B cell (primary cell): ENCODE measurements at regions of chr12 and their contacts with region 1.

Region 1: DNA sequence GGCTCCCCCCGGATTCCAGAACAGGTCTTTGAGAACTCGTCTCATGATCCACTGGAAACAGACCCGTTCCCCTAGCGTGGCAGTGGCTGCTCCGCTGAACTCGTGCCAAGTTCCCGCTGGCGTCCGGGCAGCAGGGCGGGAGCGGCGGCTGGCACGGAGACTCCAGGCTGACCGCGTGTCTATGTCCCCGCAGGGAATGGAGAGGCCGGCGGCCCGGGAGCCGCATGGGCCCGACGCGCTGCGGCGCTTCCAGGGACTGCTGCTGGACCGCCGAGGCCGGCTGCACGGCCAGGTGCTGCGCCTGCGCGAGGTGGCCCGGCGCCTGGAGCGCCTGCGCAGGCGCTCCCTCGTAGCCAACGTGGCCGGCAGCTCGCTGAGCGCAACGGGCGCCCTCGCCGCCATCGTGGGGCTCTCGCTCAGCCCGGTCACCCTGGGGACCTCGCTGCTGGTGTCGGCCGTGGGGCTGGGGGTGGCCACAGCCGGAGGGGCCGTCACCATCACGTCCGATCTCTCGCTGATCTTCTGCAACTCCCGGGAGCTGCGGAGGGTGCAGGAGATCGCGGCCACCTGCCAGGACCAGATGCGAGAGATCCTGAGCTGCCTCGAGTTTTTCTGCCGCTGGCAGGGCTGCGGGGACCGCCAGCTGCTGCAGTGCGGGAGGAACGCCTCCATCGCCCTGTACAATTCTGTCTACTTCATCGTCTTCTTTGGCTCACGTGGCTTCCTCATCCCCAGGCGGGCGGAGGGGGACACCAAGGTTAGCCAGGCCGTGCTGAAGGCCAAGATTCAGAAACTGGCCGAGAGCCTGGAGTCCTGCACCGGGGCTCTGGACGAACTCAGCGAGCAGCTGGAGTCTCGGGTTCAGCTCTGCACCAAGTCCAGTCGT is 1.5 kb downstream of the APOLD1 start:
- DNase-seq: peak; percentile 85
- ATAC-seq: peak; percentile 92
- H3K4me3 ChIP-seq: peak overlapping the region; percentile 54 to 88 (median 77)
- H3K4me3 Mint-ChIP-seq: peak overlapping the region; percentile 90
- H3K27ac ChIP-seq: peak overlapping the region; percentile 77 to 82
- H3K27ac Mint-ChIP-seq: peak overlapping the region; percentile 92
- H3K4me1 ChIP-seq: peaks cover 10 to 24% of the 10 kb centered on the region in 2 donors
- H3K4me1 Mint-ChIP-seq: peaks cover 20% of the 10 kb centered on the region
- H3K27me3 ChIP-seq: no peaks in the 10 kb centered on the region
- H3K27me3 Mint-ChIP-seq: no peaks in the 10 kb centered on the region
- CTCF ChIP-seq: peak; percentile 14

Region 2: GRCh38 chr12:12376646-12377448 is 410.1 kb before region 1 on chr12:
- CTCF ChIA-PET with region 1: interaction called, 4 read pairs
- POLR2A ChIA-PET with region 1: no interaction called
- intact Hi-C with region 1: loop called (anchors 1 kb)
- DNase-seq: peak; percentile 78
- ATAC-seq: peak; percentile 64
- H3K4me3 ChIP-seq: no peak overlapping the region
- H3K4me3 Mint-ChIP-seq: no peak overlapping the region
- H3K27ac ChIP-seq: no peak overlapping the region
- H3K27ac Mint-ChIP-seq: no peak overlapping the region
- H3K4me1 ChIP-seq: peaks cover 10 to 12% of the 10 kb centered on the region in 2 donors
- H3K4me1 Mint-ChIP-seq: peaks cover 21% of the 10 kb centered on the region
- H3K27me3 ChIP-seq: no peaks in the 10 kb centered on the region
- H3K27me3 Mint-ChIP-seq: no peaks in the 10 kb centered on the region
- CTCF ChIP-seq: peak; percentile 79

Region 3: DNA sequence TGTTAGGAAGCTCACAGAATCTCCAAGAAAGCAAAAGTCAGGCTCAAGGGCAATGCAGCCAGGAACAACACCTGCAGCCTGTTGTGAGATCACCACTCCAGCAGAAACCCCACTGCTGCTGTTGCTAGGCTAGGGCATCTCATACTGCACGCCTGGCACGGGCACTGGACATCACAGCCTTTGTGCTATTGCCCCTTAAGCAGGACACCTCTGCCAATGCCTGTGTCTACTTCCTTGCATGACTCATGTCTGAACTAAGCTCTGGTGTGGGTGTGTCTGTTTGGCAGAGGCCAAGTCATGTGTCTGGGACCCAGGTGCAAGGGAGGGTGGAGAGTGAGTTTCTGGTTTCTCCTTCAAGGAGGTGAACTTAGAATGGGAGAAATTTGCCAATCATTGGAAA is 16.2 kb after region 1 on chr12:
- CTCF ChIA-PET with region 1: interaction called, 189 read pairs
- POLR2A ChIA-PET with region 1: interaction called, 7 read pairs
- intact Hi-C with region 1: loop called (anchors 1 kb)
- DNase-seq: peak; percentile 45
- ATAC-seq: peak; percentile 51
- H3K4me3 ChIP-seq: no peak overlapping the region
- H3K4me3 Mint-ChIP-seq: peak overlapping the region; percentile 80
- H3K27ac ChIP-seq: no peak overlapping the region
- H3K27ac Mint-ChIP-seq: peak overlapping the region; percentile 86
- H3K4me1 ChIP-seq: peaks cover 23 to 45% of the 10 kb centered on the region in 2 donors
- H3K4me1 Mint-ChIP-seq: peaks cover 56% of the 10 kb centered on the region
- H3K27me3 ChIP-seq: no peaks in the 10 kb centered on the region
- H3K27me3 Mint-ChIP-seq: no peaks in the 10 kb centered on the region
- CTCF ChIP-seq: no peak

Region 4: GRCh38 chr12:12821975-12822374 is 35.0 kb after region 1 on chr12:
- CTCF ChIA-PET with region 1: interaction called, 189 read pairs
- POLR2A ChIA-PET with region 1: no interaction called
- intact Hi-C with region 1: no loop called
- DNase-seq: no peak
- ATAC-seq: no peak
- H3K4me3 ChIP-seq: no peak overlapping the region
- H3K4me3 Mint-ChIP-seq: no peak overlapping the region
- H3K27ac ChIP-seq: no peak overlapping the region
- H3K27ac Mint-ChIP-seq: no peak overlapping the region
- H3K4me1 ChIP-seq: no peaks in the 10 kb centered on the region
- H3K4me1 Mint-ChIP-seq: peaks cover 26% of the 10 kb centered on the region
- H3K27me3 ChIP-seq: no peaks in the 10 kb centered on the region
- H3K27me3 Mint-ChIP-seq: no peaks in the 10 kb centered on the region
- CTCF ChIP-seq: no peak

Region 5: DNA sequence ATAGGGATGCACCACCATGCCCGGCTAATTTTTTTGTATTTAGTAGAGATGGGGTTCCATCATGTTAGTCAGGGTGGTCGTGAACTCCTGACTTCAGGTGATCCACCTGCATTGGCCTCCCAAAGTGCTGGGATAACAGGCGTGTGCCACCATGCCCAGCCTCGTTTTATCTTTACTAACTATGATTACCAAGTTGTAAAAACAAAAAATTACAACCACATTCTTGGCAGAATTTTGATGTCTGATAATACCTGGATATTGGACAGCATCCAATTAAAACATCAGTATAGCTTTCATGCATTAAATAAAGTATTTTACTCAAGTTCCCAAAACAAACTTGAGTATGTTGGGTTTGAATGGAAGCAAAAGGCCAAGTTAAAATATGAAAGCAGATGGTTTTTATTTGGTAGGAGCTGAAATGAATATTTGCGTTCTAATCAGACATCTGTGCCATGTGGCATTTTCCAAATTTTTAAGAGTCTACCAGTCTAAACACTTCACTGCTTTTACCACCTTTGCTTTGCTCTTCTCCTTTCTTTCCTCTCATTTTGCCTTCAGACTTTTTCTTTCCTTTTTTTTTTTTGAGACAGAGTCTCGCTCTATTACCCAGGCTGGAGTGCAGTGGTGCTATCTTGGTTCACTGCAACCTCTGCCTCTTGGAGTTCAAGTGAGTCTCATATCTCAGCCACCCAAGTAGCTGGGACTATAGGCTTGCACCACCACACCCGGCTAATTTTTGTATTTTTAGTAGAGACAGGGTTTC is 58.2 kb after region 1 on chr12:
- CTCF ChIA-PET with region 1: no interaction called
- POLR2A ChIA-PET with region 1: no interaction called
- intact Hi-C with region 1: no loop called
- DNase-seq: no peak
- ATAC-seq: no peak
- H3K4me3 ChIP-seq: no peak overlapping the region
- H3K4me3 Mint-ChIP-seq: no peak overlapping the region
- H3K27ac ChIP-seq: no peak overlapping the region
- H3K27ac Mint-ChIP-seq: no peak overlapping the region
- H3K4me1 ChIP-seq: no peaks in the 10 kb centered on the region
- H3K4me1 Mint-ChIP-seq: no peaks in the 10 kb centered on the region
- H3K27me3 ChIP-seq: no peaks in the 10 kb centered on the region
- H3K27me3 Mint-ChIP-seq: no peaks in the 10 kb centered on the region
- CTCF ChIP-seq: no peak

Region 6: DNA sequence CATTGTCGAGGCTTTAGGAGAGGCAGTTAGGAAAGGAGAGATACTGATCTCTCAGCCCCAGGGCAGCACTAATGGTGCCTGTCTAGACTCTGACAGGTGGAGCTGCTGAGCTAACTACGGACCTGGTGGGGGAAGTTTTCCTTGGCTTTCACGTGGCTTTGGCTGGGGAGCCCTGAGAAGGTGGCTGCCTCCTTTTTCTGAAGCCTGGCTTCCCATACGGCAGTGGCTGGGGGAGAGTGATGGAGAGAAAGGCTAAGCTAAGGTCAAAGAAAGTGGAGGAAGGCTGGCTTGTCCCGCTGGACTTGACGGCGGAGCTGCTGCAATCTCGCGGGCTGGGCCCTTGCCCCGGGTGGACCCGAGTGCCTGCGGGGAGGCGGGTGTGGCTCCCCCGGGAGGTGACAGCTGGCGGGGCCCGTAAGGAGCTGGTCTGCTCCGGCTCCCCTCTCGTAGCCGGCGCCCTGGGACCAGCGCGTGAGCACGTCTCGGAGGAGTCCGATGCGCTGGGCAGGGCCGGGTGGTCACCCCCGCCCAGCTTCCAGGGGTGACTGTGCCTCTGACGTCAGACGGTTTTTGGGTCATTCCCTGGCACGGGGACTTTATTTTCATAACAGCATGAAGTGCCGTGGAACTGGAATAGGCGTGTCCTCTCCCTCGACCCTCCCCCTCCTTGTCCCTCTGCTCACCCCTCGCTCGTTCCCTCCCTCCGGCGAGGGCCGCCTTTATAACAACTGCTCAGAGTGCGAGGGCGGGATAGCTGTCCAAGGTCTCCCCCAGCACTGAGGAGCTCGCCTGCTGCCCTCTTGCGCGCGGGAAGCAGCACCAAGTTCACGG is 104.1 kb after region 1 on chr12 and contains the start of gene GPRC5A:
- CTCF ChIA-PET with region 1: interaction called, 3 read pairs
- POLR2A ChIA-PET with region 1: no interaction called
- intact Hi-C with region 1: loop called (anchors 5 kb)
- DNase-seq: peak; percentile 51
- ATAC-seq: peak; percentile 21
- H3K4me3 ChIP-seq: peak within 1 kb of the TSS in 4 of 5 experiments; percentile 17 to 50 (median 44)
- H3K4me3 Mint-ChIP-seq: peak within 1 kb of the TSS; percentile 87
- H3K27ac ChIP-seq: no peak within 1 kb of the TSS
- H3K27ac Mint-ChIP-seq: no peak within 1 kb of the TSS
- H3K4me1 ChIP-seq: peaks cover 15% of the 10 kb centered on the region in 2 donors
- H3K4me1 Mint-ChIP-seq: peaks cover 13% of the 10 kb centered on the region
- H3K27me3 ChIP-seq: peaks cover 0 to 44% (median 30%) of the 10 kb centered on the region in 4 experiments
- H3K27me3 Mint-ChIP-seq: peaks cover 60% of the 10 kb centered on the region
- CTCF ChIP-seq: no peak
- total RNA-seq, gene GPRC5A: not detected in 2 replicates

Region 7: DNA sequence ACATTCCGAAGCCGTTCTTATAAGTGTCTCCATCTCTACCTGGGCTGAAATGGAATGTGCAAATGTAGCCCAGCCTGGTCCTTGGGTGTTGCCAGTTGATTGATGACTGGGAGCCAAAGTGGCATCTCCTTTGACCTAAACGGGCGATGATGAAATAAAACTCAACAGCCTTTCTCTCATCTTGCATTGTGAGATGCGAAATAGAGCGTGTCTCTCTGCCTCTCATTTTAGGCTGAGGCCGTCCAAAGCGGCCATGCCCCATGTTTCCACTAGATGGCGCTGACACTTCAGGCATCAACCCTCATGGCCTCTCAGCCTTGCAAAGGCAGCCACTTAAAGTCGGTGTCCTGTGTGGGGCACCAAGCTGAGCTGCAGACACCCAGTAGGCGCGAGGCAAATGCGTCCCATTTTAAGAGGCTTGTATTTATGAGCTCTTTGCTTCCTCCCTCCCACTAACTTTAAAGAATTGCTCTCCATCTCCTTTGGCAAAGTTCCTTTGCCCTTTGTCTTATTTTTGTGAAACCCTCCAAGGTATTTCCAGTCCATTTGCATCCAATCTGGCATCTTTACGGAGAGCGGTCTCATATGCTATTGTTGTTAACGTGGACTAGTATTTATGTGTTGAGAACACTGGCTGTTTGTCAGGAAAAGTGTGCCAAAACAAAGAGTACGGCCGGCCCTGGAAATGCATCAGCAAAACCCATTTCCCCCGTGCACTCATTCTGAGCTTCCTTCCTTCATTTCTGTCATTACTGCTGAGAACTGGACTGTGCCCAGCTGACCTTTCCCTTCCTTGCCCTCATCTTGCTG is 129.4 kb after region 1 on chr12:
- CTCF ChIA-PET with region 1: interaction called, 33 read pairs
- POLR2A ChIA-PET with region 1: no interaction called
- intact Hi-C with region 1: loop called (anchors 1 kb)
- DNase-seq: peak; percentile 88
- ATAC-seq: peak; percentile 97
- H3K4me3 ChIP-seq: peak overlapping the region in 1 of 5 experiments; percentile 9
- H3K4me3 Mint-ChIP-seq: no peak overlapping the region
- H3K27ac ChIP-seq: no peak overlapping the region
- H3K27ac Mint-ChIP-seq: no peak overlapping the region
- H3K4me1 ChIP-seq: peaks cover 5 to 9% of the 10 kb centered on the region in 2 donors
- H3K4me1 Mint-ChIP-seq: peaks cover 6% of the 10 kb centered on the region
- H3K27me3 ChIP-seq: peaks cover 0 to 16% (median 6%) of the 10 kb centered on the region in 4 experiments
- H3K27me3 Mint-ChIP-seq: peaks cover 17% of the 10 kb centered on the region
- CTCF ChIP-seq: peak; percentile 94

Region 8: DNA sequence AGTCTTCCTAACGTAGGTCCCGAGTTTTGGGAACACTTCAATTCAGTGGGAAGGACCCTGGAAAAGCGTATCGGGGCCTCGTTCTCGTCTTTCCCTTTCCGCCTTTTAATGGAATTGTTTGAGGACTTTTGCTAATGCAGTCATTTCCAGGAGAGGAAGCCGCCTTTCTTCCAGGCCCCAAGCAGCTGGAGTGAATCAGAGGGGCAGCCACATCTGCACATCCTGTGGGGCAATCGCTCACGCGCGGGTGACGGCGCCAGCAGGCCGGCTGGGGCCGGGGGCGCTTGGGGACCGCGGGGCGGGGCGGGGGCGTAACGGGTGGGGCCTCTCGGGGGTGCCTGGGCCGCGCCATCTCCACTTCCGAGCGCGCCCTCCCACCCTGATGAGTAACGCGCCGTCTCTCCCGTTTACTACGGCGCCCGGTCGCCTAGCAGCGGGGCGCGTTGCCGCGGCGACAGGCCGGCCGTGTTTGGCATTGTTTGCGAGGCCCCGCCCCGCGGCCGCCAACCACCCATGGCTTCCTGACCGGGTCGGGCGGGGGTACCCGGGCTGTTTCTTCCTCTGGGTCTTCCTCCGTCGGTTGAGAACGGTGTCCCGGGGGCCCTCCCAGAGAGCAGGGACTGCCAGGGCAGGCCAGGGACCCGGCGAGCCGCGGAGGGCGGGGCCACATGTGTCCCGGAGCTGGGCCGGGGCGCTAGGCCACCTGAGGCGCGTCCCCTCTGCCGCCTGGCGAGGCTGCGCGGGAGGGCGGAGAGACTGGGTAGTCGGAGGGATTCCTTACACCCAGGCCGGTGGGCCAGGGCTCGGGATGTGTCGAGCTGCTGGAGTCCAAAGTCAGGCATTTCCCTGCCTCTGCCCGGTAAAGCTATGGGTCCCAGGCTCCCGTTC is 314.2 kb after region 1 on chr12:
- CTCF ChIA-PET with region 1: no interaction called
- POLR2A ChIA-PET with region 1: no interaction called
- intact Hi-C with region 1: loop called (anchors 2 kb)
- DNase-seq: peak; percentile 97
- ATAC-seq: peak; percentile 77
- H3K4me3 ChIP-seq: peak overlapping the region; percentile 39 to 82 (median 71)
- H3K4me3 Mint-ChIP-seq: peak overlapping the region; percentile 88
- H3K27ac ChIP-seq: peak overlapping the region; percentile 97 to 99
- H3K27ac Mint-ChIP-seq: peak overlapping the region; percentile 96
- H3K4me1 ChIP-seq: peaks cover 52 to 63% of the 10 kb centered on the region in 2 donors
- H3K4me1 Mint-ChIP-seq: peaks cover 62% of the 10 kb centered on the region
- H3K27me3 ChIP-seq: no peaks in the 10 kb centered on the region
- H3K27me3 Mint-ChIP-seq: no peaks in the 10 kb centered on the region
- CTCF ChIP-seq: no peak

Region 9: DNA sequence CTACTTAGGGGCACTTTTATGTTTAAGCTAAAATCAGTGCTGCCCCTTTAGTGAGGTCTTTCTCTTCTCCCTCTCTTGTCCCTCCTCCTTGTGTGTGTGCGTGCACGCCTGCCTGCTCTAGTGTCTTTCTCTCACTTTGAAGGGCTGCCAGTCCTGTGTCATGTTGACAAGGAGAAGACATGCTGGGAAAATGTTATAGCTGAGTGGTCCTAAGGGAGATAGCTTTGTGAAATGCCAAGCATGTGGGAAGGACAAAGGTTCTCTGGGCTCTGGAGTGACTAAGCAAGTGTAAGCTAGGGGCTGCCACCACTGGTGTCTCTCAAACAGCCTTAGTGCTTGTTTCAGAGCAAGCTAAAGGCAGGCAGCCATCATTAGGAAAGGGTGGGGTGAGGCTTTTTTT is 518.0 kb after region 1 on chr12:
- CTCF ChIA-PET with region 1: no interaction called
- POLR2A ChIA-PET with region 1: no interaction called
- intact Hi-C with region 1: no loop called
- DNase-seq: no peak
- ATAC-seq: no peak
- H3K4me3 ChIP-seq: no peak overlapping the region
- H3K4me3 Mint-ChIP-seq: no peak overlapping the region
- H3K27ac ChIP-seq: no peak overlapping the region
- H3K27ac Mint-ChIP-seq: no peak overlapping the region
- H3K4me1 ChIP-seq: no peaks in the 10 kb centered on the region
- H3K4me1 Mint-ChIP-seq: no peaks in the 10 kb centered on the region
- H3K27me3 ChIP-seq: peaks cover 0 to 10% (median 0%) of the 10 kb centered on the region in 4 experiments
- H3K27me3 Mint-ChIP-seq: peaks cover 20% of the 10 kb centered on the region
- CTCF ChIP-seq: no peak